ENCODE measurements at regions of chr13 and their contacts with region 1.

Region 1: GRCh38 chr13:48112896-48113762 is 18.2 kb upstream of the MED4 start:
- DNase-seq: no peak
- H3K4me3 ChIP-seq: no peak overlapping the region
- H3K27ac ChIP-seq: no peak overlapping the region
- H3K4me1 ChIP-seq: peaks cover 0 to 18% (median 12%) of the 10 kb centered on the region in 4 donors
- H3K27me3 ChIP-seq: no peaks in the 10 kb centered on the region
- CTCF ChIP-seq: no peak

Region 2: GRCh38 chr13:48175185-48175584 is 62.1 kb after region 1 on chr13:
- intact Hi-C with region 1: loop called (anchors 2 kb)
- DNase-seq: no peak
- H3K4me3 ChIP-seq: no peak overlapping the region
- H3K27ac ChIP-seq: no peak overlapping the region
- H3K4me1 ChIP-seq: peaks cover 0 to 5% (median 0%) of the 10 kb centered on the region in 4 donors
- H3K27me3 ChIP-seq: no peaks in the 10 kb centered on the region
- CTCF ChIP-seq: no peak

Region 3: GRCh38 chr13:48317511-48318376 is 204.6 kb after region 1 on chr13:
- intact Hi-C with region 1: no loop called
- DNase-seq: no peak
- H3K4me3 ChIP-seq: peak overlapping the region; percentile 47
- H3K27ac ChIP-seq: peak overlapping the region in 1 of 2 donors; percentile 33
- H3K4me1 ChIP-seq: peaks cover 0 to 6% (median 0%) of the 10 kb centered on the region in 4 donors
- H3K27me3 ChIP-seq: no peaks in the 10 kb centered on the region
- CTCF ChIP-seq: no peak

Measured in tibial artery (tissue), 4 donors.